ENCODE measurements at regions of chr6 and their contacts with region 1.

Region 1: GRCh38 chr6:136669299-136669699 is 119.1 kb upstream of the MAP7 start:
- DNase-seq: no peak
- CTCF ChIP-seq: no peak

Region 2: GRCh38 chr6:136657666-136658065 is 11.6 kb before region 1 on chr6:
- CTCF ChIA-PET with region 1: interaction called, 10 read pairs
- POLR2A ChIA-PET with region 1: no interaction called
- DNase-seq: no peak
- CTCF ChIP-seq: no peak